A673 (cell line): ENCODE measurements at regions of chr1 and their contacts with region 1.

Region 1: GRCh38 chr1:40373338-40374283 is at the start of gene SMAP2:
- DNase-seq: peak; percentile 99
- H3K4me3 ChIP-seq: peak within 1 kb of the TSS; percentile 99
- H3K27ac ChIP-seq: peak within 1 kb of the TSS; percentile 67
- H3K4me1 ChIP-seq: peaks cover 42% of the 10 kb centered on the region
- H3K27me3 ChIP-seq: no peaks in the 10 kb centered on the region
- CTCF ChIP-seq: no peak
- total RNA-seq, gene SMAP2: 52.0 and 58.5 TPM in 2 replicates

Region 2: GRCh38 chr1:39745016-39745670 is 628.5 kb before region 1 on chr1:
- CTCF ChIA-PET with region 1: no interaction called
- POLR2A ChIA-PET with region 1: no interaction called
- intact Hi-C with region 1: no loop called
- DNase-seq: no peak
- H3K4me3 ChIP-seq: no peak overlapping the region
- H3K27ac ChIP-seq: no peak overlapping the region
- H3K4me1 ChIP-seq: peaks cover under 1% of the 10 kb centered on the region
- H3K27me3 ChIP-seq: no peaks in the 10 kb centered on the region
- CTCF ChIP-seq: no peak

Region 3: DNA sequence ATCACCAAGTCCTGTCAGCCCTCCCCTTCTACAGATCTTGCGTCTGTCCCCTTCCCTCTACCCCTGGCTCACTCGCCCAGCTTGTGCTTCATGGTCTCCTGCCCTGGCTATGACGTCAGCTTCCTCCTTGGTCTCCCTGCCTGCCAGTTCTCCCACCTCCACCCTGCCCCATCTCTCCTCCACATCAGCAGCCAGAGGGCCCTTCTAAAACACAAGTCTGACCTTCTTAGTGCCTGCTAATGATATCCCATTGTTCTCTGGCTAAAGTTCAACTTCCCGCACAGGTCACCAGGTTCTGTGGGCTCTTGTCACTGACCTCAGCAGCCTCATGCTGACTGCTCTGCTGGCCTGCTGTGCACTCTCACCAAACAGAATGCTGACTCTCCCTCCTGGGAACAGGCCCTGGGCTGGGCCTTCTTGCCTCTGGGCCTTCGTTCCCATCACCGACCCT is 447.2 kb before region 1 on chr1:
- CTCF ChIA-PET with region 1: no interaction called
- POLR2A ChIA-PET with region 1: no interaction called
- intact Hi-C with region 1: no loop called
- DNase-seq: no peak
- H3K4me3 ChIP-seq: no peak overlapping the region
- H3K27ac ChIP-seq: no peak overlapping the region
- H3K4me1 ChIP-seq: no peaks in the 10 kb centered on the region
- H3K27me3 ChIP-seq: no peaks in the 10 kb centered on the region
- CTCF ChIP-seq: no peak

Region 4: GRCh38 chr1:40383488-40384412 is 10.1 kb after region 1 on chr1:
- CTCF ChIA-PET with region 1: no interaction called
- POLR2A ChIA-PET with region 1: interaction called, 10 read pairs
- intact Hi-C with region 1: no loop called
- DNase-seq: no peak
- H3K4me3 ChIP-seq: peak overlapping the region; percentile 15
- H3K27ac ChIP-seq: peak overlapping the region; percentile 93
- H3K4me1 ChIP-seq: peaks cover 83% of the 10 kb centered on the region
- H3K27me3 ChIP-seq: no peaks in the 10 kb centered on the region
- CTCF ChIP-seq: no peak

Region 5: GRCh38 chr1:40392221-40392620 is 18.6 kb after region 1 on chr1:
- CTCF ChIA-PET with region 1: no interaction called
- POLR2A ChIA-PET with region 1: interaction called, 12 read pairs
- intact Hi-C with region 1: no loop called
- DNase-seq: peak; percentile 90
- H3K4me3 ChIP-seq: no peak overlapping the region
- H3K27ac ChIP-seq: peak overlapping the region; percentile 4
- H3K4me1 ChIP-seq: peaks cover 26% of the 10 kb centered on the region
- H3K27me3 ChIP-seq: no peaks in the 10 kb centered on the region
- CTCF ChIP-seq: no peak

Region 6: GRCh38 chr1:40438391-40439015 is 64.9 kb after region 1 on chr1:
- CTCF ChIA-PET with region 1: interaction called, 12 read pairs
- POLR2A ChIA-PET with region 1: no interaction called
- intact Hi-C with region 1: no loop called
- DNase-seq: peak; percentile 56
- H3K4me3 ChIP-seq: no peak overlapping the region
- H3K27ac ChIP-seq: no peak overlapping the region
- H3K4me1 ChIP-seq: no peaks in the 10 kb centered on the region
- H3K27me3 ChIP-seq: no peaks in the 10 kb centered on the region
- CTCF ChIP-seq: peak; percentile 87